ENCODE measurements at regions of chr2 and their contacts with region 1.

Region 1: GRCh38 chr2:227238238-227239237 is 74.1 kb downstream of the COL4A3 start:
- DNase-seq: peak; percentile 54
- ATAC-seq: peak; percentile 68; the same call in 1 of the 2 replicates
- H3K4me3 ChIP-seq: no peak overlapping the region
- H3K27ac ChIP-seq: no peak overlapping the region
- H3K4me1 ChIP-seq: no peaks in the 10 kb centered on the region
- H3K27me3 ChIP-seq: peaks cover 2% of the 10 kb centered on the region; the same call in 1 of the 2 replicates
- CTCF ChIP-seq: peak; percentile 93

Region 2: GRCh38 chr2:227248876-227249275 is 10.3 kb after region 1 on chr2:
- CTCF ChIA-PET with region 1: interaction called, 11 read pairs
- POLR2A ChIA-PET with region 1: no interaction called
- in situ Hi-C with region 1: no loop called
- intact Hi-C with region 1: no loop called
- DNase-seq: no peak
- ATAC-seq: no peak
- H3K4me3 ChIP-seq: no peak overlapping the region
- H3K27ac ChIP-seq: no peak overlapping the region
- H3K4me1 ChIP-seq: no peaks in the 10 kb centered on the region
- H3K27me3 ChIP-seq: no peaks in the 10 kb centered on the region
- CTCF ChIP-seq: no peak

Measured in Panc1 (cell line).